A673 (cell line): ENCODE measurements at regions of chr1 and their contacts with region 1.

Region 1: DNA sequence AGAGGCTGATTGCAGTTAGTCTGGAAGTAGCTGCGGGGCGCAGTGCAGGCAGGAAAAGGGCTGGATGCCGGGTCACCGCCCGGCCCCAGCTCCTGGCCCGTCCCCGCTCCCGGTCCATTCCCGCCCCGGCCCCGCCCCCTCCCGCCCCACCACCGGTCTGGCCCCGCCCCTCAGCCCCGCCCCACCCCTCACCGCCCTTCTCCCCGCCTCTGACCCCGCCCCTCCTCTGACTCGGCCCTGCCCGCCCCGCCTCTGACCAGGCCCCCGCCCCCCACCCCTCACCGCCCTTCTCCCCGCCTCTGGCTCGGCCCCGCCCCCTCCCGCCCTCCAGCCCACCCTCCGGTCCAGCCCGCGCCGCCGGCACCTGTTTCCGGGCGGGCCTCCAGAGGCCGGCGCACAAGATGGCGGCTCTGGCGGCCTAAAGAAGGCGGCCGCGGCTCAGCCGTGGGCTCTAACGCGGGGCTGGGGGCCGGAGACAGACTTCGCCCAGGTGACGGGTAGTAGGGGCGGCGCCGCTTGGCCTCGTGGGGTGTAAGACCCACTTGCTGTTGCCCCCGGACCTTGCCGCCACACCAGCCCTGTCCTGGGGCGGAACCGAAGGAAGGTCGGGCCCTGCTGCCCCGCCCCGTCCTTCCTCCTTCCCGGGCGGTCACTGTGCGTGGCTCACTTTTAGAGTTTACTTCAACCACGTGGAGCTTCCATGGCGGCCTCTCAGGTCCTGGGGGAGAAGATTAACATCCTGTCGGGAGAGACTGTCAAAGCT is at the start of gene UBIAD1:
- DNase-seq: peak; percentile 91
- H3K4me3 ChIP-seq: peak within 1 kb of the TSS; percentile 95
- H3K27ac ChIP-seq: peak within 1 kb of the TSS; percentile 95
- H3K4me1 ChIP-seq: no peaks in the 10 kb centered on the region
- H3K27me3 ChIP-seq: no peaks in the 10 kb centered on the region
- CTCF ChIP-seq: no peak
- total RNA-seq, gene UBIAD1: 19.6 and 20.5 TPM in 2 replicates

Region 2: DNA sequence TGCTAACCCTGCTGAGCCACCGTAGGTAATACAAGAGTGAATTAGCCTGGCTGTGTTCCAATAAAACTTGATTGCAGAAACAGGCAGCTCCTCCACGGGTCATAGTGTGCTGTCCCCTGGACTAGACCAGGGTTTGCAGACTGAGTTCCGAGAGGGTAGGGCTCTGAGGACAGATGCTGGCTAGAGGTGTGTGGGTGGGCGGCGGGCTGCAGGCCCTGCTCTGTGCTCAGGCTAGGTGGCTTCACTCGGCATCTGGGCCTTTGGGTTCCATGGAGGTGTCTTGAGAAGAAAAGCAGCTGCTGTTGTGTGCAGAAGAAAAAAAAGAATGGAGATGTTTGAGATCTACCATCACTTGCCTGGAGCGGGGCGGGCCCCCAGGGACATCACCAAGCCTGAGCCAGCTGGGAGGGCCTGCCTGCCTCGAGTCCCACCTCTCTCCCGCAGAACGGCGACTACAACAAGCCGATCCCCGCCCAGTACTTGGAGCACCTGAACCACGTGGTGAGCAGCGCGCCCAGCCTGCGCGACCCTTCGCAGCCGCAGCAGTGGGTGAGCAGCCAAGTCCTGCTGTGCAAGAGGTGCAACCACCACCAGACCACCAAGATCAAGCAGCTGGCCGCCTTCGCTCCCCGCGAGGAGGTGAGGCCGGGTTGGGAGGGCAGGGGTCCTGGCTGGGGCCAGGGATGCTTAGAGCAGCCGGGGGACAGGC is 1676.4 kb before region 1 on chr1:
- CTCF ChIA-PET with region 1: no interaction called
- POLR2A ChIA-PET with region 1: interaction called, 10 read pairs
- intact Hi-C with region 1: no loop called
- DNase-seq: peak; percentile 48
- H3K4me3 ChIP-seq: no peak overlapping the region
- H3K27ac ChIP-seq: peak overlapping the region; percentile 53
- H3K4me1 ChIP-seq: peaks cover 37% of the 10 kb centered on the region
- H3K27me3 ChIP-seq: no peaks in the 10 kb centered on the region
- CTCF ChIP-seq: no peak

Region 3: DNA sequence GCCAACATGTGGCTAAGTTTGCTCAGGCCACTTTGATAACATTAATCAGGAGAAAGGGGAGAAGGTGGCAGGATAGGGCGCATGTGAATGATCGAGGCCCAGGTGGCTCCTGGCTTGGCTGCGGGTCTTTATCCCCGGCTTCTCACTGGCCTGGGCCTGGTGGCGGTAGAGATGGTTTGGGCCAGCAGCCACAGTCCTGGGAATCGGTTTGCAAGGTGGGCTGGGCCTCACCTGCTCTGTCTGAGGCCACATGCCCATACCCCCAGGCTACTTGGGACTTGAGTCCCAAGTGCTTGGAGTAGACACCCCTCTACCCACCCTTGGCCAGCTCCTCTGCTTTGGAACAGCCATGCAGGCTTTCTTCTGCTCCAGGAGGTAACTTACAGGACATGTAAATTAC is 156.2 kb after region 1 on chr1:
- CTCF ChIA-PET with region 1: no interaction called
- POLR2A ChIA-PET with region 1: no interaction called
- intact Hi-C with region 1: no loop called
- DNase-seq: no peak
- H3K4me3 ChIP-seq: no peak overlapping the region
- H3K27ac ChIP-seq: no peak overlapping the region
- H3K4me1 ChIP-seq: no peaks in the 10 kb centered on the region
- H3K27me3 ChIP-seq: peaks cover 15% of the 10 kb centered on the region
- CTCF ChIP-seq: no peak